A673 (cell line): ENCODE measurements at regions of chr17 and their contacts with region 1.

Region 1: GRCh38 chr17:64315032-64315490 is 52.0 kb upstream of the TEX2 start:
- DNase-seq: no peak
- H3K4me3 ChIP-seq: no peak overlapping the region
- H3K27ac ChIP-seq: no peak overlapping the region
- H3K4me1 ChIP-seq: no peaks in the 10 kb centered on the region
- H3K27me3 ChIP-seq: no peaks in the 10 kb centered on the region
- CTCF ChIP-seq: no peak

Region 2: DNA sequence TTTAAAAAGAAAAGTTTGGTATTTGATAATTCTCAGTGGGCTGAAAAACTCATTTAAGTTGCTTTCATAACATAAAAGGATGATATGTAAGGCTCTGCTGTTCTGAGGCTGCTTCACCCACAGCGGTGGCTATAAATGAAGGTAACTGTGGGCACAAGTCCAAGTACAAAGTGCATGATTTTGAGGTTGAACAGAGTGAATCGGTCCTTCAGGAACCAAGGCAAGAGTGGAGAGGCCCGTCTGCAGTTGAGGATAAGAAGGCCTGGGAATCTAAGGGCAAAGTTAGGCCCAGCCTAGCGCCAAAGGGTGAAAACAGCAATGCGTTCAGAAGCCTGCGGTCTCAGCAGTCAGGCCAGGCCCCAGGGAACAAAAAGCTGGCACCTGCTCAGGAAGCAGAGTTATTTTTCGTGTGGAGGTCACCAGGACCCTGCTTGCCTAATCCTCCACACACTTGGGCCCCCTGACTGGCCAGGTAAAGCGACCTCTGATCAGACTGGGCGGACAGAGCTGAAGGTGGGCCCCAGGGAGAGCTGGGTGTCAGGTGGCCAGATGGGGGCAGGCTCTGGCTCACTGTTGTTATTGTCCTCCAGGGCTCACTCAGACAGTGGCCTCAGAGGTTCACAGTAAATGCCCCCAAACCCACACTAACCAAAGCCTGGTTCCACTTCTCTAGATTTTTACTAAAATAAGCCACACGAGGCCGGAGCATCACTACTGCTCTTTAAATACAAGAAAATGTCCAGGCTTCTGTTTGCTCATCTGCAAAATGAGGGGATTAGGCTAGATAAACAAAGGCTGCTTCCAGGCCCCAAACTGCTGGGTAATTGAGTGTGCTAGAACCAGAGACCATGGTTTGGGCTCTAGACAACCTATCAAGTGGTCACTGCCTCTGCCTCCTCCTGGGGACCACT is 98.5 kb before region 1 on chr17:
- CTCF ChIA-PET with region 1: no interaction called
- POLR2A ChIA-PET with region 1: no interaction called
- intact Hi-C with region 1: no loop called
- DNase-seq: no peak
- H3K4me3 ChIP-seq: no peak overlapping the region
- H3K27ac ChIP-seq: no peak overlapping the region
- H3K4me1 ChIP-seq: peaks cover 34% of the 10 kb centered on the region
- H3K27me3 ChIP-seq: no peaks in the 10 kb centered on the region
- CTCF ChIP-seq: no peak

Region 3: DNA sequence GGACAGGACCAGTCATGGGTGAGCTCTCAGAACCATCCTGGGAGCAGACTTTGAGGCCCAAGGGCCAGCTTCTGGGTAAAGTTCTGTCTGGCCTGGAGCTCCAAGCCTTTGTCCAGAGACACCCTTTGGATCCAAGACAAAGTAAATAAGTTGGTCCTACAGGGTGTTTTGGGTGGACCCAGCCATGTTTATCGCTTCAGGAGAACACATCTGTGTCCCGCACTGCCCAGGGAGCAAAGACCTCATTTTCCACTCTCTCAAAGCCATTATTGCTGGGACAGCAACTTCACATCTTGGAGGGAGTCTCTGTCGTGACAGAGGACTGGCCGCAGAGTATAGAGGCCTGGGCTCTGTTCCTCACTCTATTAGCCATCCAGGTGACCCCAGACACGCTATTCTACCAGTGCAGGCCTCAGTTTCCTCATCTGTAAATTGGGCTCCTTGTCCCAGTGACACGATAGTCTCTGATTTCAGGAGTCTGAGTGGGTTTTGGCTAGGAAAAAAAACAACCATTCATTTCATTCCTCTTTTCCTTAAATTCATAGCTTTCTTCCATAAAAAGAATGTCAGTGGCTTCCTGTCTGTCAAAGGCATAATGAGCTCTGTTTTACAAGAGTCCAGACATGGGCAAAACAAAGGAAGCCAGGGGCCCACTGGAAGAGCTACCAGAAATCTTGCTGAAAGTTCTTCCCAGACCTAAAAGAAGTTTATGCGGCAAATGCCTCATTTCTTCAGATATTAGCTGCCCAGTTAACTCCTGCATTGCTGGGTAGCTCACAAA is 13.2 kb after region 1 on chr17:
- CTCF ChIA-PET with region 1: no interaction called
- POLR2A ChIA-PET with region 1: no interaction called
- intact Hi-C with region 1: loop called (anchors 1 kb)
- DNase-seq: peak; percentile 36
- H3K4me3 ChIP-seq: no peak overlapping the region
- H3K27ac ChIP-seq: peak overlapping the region; percentile 35
- H3K4me1 ChIP-seq: peaks cover 15% of the 10 kb centered on the region
- H3K27me3 ChIP-seq: no peaks in the 10 kb centered on the region
- CTCF ChIP-seq: no peak